Activated naive CD4-positive, alpha-beta T cell treated with anti-CD3 and anti-CD28 coated beads for 36 hours (primary cell): ENCODE measurements at regions of chr7 and their contacts with region 1.

Region 1: DNA sequence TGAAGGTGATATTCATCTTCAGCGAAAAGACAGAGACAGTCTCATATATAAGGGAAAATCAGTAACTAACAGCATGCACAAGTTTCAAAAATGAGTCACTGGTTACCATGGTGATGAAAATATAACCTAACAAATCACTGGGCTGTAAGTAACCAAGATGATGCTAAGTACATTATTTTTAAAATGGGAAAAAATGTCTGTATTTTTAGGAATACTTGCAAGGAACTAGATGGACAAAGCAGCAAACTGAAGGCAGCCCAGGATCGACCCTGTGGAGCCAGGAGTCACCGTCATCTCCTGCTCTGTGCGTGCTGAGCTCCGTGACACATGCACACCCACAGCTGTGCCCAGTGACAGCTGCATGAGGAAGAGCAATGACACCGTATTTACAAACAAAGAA is 137.3 kb downstream of the ELMO1 start:
- DNase-seq: peak; percentile 17
- H3K4me3 Mint-ChIP-seq: no peak overlapping the region
- H3K27ac Mint-ChIP-seq: peak overlapping the region; percentile 50
- H3K4me1 Mint-ChIP-seq: peaks cover 75% of the 10 kb centered on the region
- H3K27me3 Mint-ChIP-seq: no peaks in the 10 kb centered on the region

Region 2: DNA sequence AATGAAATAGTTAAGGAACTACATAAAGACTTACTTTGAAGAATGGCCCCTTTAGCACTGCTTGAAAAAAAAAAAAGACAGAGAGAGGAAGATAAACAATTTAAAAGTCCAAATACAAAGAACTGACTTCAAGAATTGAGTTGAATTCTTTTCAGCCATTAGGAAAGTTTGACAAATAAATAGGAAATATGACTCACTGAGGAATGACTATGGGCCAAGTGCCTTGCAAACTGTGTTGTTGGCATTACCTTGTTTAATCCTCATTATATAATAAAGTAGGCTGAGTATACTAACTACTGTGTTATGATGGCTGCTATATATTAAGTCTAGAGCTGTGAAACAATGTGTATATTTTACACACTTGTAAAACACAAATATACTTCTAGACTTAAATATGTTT is 13.8 kb before region 1 on chr7:
- CTCF ChIA-PET with region 1: no interaction called
- intact Hi-C with region 1: loop called (anchors 2 kb)
- DNase-seq: no peak
- H3K4me3 Mint-ChIP-seq: no peak overlapping the region
- H3K27ac Mint-ChIP-seq: peak overlapping the region; percentile 47
- H3K4me1 Mint-ChIP-seq: peaks cover 22% of the 10 kb centered on the region
- H3K27me3 Mint-ChIP-seq: no peaks in the 10 kb centered on the region

Region 3: DNA sequence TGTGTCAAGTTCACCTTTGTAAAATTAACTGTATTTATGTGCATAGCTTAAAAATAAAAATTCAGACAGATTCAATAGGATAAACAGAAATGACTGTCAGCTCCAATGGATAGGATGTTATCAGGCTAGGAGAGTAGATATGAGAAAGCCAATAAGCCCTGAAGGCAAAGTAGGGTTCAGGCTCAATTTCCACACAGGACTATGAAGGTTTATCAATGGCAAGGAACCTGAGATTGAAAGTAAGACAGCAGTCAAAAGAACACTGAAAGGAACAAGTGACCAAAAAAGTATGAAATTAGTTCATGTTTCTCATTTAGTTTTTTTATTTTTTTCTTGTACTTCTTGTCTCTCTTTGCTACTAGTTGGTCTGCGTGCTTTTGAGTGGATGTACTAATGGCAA is 15.9 kb after region 1 on chr7:
- CTCF ChIA-PET with region 1: no interaction called
- intact Hi-C with region 1: loop called (anchors 1 kb)
- DNase-seq: no peak
- H3K4me3 Mint-ChIP-seq: no peak overlapping the region
- H3K27ac Mint-ChIP-seq: peak overlapping the region; percentile 27
- H3K4me1 Mint-ChIP-seq: peaks cover 48% of the 10 kb centered on the region
- H3K27me3 Mint-ChIP-seq: no peaks in the 10 kb centered on the region